Activated B cell treated with CpG ODN at 0.5 μM for 24 hours (primary cell): ENCODE measurements at regions of chr10 and their contacts with region 1.

Region 1: DNA sequence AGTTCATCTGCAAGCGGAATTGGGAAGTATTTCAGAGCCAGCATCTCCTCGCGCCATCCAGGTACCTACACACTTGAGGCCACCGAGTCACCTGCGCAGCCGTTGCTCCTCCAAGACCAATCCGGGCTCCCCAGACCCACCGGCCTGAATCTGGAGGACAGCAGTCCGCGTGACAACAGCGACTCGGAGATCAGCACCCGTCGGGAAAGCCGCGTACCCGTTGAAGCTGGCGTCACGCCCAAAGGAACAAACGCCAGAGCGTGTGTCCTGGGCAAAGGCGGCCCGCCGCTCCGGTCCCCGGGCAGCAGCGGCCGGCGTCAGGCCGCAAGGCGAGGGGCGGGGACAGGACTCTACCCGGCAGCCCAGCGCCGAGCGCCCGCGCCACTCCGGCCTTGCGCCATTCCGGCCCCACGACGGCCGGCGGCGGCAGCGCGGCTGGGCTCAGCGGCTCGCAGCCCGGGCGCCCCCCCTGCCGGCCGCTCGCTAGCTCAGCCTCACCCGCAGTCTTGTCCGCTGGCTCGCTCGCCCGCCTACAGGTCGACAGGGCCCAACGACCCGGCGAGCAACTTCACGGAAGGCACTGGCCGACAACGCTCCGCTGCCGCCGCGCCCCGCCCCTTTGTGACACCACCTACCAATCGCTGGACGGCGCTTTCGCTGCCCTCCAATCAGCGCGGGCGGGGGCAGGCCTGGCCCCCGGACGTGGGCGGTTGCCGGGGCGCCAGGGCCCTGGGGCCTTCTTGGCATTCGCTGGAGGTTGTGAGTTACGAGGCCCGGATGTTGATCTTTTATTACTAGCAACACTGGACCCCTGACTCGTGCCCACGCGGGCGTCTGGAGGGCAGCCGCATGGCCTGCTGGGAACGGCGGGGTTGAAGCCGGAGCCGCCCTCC is at the start of gene ZFAND4:
- DNase-seq: peak; percentile 92
- ATAC-seq: peak; percentile 95
- H3K4me3 Mint-ChIP-seq: peak within 1 kb of the TSS; percentile 87
- H3K27ac Mint-ChIP-seq: peak within 1 kb of the TSS; percentile 89
- H3K4me1 Mint-ChIP-seq: peaks cover 28% of the 10 kb centered on the region
- H3K27me3 Mint-ChIP-seq: no peaks in the 10 kb centered on the region
- CTCF ChIP-seq: no peak
- total RNA-seq, gene ZFAND4: 19.8 and 22.1 TPM in 2 replicates

Region 2: GRCh38 chr10:45000752-45001380 is 671.6 kb before region 1 on chr10 and contains the start of gene ZNF22:
- CTCF ChIA-PET with region 1: no interaction called
- POLR2A ChIA-PET with region 1: no interaction called
- intact Hi-C with region 1: loop called (anchors 5 kb)
- DNase-seq: peak; percentile 76
- ATAC-seq: peak; percentile 82
- H3K4me3 Mint-ChIP-seq: peak within 1 kb of the TSS; percentile 90
- H3K27ac Mint-ChIP-seq: peak within 1 kb of the TSS; percentile 93
- H3K4me1 Mint-ChIP-seq: peaks cover 25% of the 10 kb centered on the region
- H3K27me3 Mint-ChIP-seq: no peaks in the 10 kb centered on the region
- CTCF ChIP-seq: no peak
- total RNA-seq, gene ZNF22: 34.2 and 37.5 TPM in 2 replicates

Region 3: DNA sequence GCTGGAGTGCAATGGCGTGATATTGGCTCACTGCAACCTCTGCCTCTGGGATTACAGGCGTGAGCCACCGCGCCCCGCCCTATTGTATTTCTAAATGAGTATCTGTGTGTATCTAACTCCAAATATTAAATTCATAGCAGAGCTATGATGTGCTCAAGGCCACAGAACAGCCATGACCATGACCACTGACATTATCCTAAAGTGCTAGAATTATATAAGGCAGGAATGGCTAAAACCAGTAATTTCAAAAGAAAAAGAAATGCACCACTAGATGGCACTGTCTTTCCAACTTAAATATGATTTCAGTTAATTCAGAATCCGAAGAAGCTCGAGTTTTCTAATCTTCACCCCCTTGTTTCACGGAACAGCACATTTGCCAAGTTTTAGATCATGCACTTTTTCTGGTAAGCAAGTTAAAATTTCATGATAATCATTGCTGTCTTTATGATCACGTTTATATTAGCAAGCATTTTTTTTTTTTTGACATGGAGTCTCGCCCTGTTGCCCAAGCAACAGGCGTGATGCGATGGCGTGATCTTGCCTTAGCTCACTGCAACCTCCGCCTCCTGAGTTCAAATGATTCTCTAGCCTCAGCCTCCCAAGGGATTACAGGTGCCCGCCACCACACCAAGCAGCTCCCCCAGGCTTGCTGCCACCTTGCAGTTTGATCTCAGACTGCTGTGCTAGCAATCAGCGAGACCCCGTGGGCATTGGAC is 422.3 kb before region 1 on chr10:
- CTCF ChIA-PET with region 1: interaction called, 19 read pairs
- POLR2A ChIA-PET with region 1: interaction called, 9 read pairs
- intact Hi-C with region 1: loop called (anchors 1 kb)
- DNase-seq: peak; percentile 42
- ATAC-seq: peak; percentile 84
- H3K4me3 Mint-ChIP-seq: peak overlapping the region; percentile 85
- H3K27ac Mint-ChIP-seq: peak overlapping the region; percentile 91
- H3K4me1 Mint-ChIP-seq: peaks cover 26% of the 10 kb centered on the region
- H3K27me3 Mint-ChIP-seq: peaks cover 2% of the 10 kb centered on the region
- CTCF ChIP-seq: peak; percentile 81

Region 4: DNA sequence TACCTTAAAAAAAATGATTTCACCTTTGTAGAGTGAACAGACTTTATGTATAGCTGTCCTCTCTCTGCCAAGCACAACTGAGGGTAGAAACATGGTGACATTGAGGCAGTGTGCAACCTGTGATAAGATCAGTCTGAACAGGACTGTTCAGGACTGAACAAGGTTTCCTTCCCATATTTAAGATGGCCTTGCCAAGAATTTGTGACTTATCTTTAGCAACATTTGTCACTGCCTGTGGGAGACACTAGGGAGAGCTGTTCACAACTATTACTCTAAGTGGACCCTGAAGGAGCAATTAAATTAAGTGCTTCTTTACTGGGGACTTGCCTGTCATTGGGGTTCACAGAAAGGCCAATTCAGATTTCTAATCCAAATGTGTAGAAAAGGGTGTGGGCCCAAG is 363.7 kb before region 1 on chr10:
- CTCF ChIA-PET with region 1: no interaction called
- POLR2A ChIA-PET with region 1: no interaction called
- intact Hi-C with region 1: loop called (anchors 5 kb)
- DNase-seq: no peak
- ATAC-seq: peak; percentile 18
- H3K4me3 Mint-ChIP-seq: no peak overlapping the region
- H3K27ac Mint-ChIP-seq: no peak overlapping the region
- H3K4me1 Mint-ChIP-seq: peaks cover 3% of the 10 kb centered on the region
- H3K27me3 Mint-ChIP-seq: no peaks in the 10 kb centered on the region
- CTCF ChIP-seq: no peak

Region 5: GRCh38 chr10:45339894-45340293 is 332.5 kb before region 1 on chr10:
- CTCF ChIA-PET with region 1: no interaction called
- POLR2A ChIA-PET with region 1: no interaction called
- intact Hi-C with region 1: no loop called
- DNase-seq: no peak
- ATAC-seq: no peak
- H3K4me3 Mint-ChIP-seq: no peak overlapping the region
- H3K27ac Mint-ChIP-seq: no peak overlapping the region
- H3K4me1 Mint-ChIP-seq: peaks cover 10% of the 10 kb centered on the region
- H3K27me3 Mint-ChIP-seq: no peaks in the 10 kb centered on the region
- CTCF ChIP-seq: no peak

Region 6: DNA sequence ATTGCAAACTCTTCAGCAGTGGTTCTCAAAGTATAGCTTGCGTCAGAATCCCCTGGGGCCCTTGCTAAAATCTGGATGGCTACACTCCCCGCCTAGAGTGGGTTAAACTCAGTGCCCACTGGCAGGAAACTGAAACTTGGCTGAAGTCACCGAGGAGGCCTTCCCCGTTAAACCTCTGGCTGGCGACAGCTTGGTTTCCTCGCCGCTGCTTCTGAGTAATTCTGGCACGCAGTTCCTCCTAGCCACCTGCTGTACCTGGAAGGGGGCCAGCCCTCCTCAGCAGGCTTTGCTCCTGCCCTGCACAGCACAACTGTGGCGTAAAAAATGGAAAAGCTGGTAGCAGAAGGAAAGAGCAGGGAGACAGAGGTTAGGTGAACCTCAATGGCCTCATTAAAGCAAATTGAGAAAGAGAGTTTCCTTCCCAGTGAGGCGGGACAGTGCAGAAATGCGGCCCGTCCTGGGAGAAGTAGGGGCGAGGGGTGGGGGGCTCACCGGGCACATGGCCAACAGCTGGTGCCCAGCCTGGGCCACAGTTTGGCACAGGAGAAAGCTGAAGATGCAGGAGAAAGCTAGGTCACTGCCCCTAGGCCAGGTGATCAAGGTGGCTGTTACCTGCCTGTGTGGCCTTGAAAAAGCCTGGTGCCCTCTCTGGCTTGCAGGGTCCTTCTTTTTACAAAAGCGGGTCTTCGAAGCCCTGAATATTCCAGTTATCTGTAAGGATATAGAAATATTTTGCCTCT is 251.8 kb before region 1 on chr10:
- CTCF ChIA-PET with region 1: no interaction called
- POLR2A ChIA-PET with region 1: no interaction called
- intact Hi-C with region 1: loop called (anchors 5 kb)
- DNase-seq: peak; percentile 50
- ATAC-seq: peak; percentile 56
- H3K4me3 Mint-ChIP-seq: peak overlapping the region; percentile 95
- H3K27ac Mint-ChIP-seq: peak overlapping the region; percentile 97
- H3K4me1 Mint-ChIP-seq: peaks cover 65% of the 10 kb centered on the region
- H3K27me3 Mint-ChIP-seq: no peaks in the 10 kb centered on the region
- CTCF ChIP-seq: no peak

Region 7: DNA sequence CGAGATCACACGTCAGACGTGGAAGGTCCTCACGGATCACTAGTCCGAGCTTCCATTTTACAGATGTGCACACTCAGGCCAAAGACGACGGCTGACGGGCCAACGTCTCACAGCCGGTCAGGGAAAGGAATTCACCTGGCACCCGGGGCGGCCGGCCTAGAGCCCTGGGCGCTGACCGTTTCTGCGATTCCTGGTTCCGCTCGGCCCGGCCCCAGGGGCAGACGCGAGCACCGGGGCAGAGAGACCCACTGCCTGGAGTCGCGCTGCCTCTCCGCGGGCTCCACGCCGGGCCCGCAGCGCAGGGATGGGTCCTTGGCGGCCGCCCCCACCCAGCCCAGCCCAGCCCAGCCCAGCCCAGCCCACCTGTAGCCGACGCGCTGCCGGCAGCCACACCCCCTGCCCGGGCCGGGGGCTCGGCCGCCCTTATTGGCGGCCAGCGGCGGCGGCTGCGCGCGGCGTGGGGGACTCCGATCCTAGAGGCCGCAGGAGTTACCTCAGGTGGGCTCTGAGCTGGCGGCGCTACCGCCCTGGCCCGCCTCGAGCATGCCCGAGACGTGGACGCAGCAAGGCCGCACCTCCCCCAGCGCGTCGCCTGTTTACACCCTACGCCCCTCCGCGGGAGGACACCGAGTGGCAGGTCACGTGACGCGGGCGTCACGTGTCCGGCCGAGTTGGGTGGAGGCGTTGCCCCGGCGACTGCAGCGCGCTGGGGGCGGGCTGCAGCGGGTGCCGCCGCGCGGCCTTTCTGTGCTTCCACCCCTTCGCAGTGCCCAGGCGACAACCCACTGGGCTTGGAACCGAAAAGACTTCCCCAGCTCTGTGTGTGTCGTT is 77.9 kb before region 1 on chr10:
- CTCF ChIA-PET with region 1: interaction called, 5 read pairs
- POLR2A ChIA-PET with region 1: interaction called, 4 read pairs
- intact Hi-C with region 1: loop called (anchors 5 kb)
- DNase-seq: peak; percentile 91
- ATAC-seq: peak; percentile 88
- H3K4me3 Mint-ChIP-seq: peak overlapping the region; percentile 86
- H3K27ac Mint-ChIP-seq: peak overlapping the region; percentile 91
- H3K4me1 Mint-ChIP-seq: peaks cover 42% of the 10 kb centered on the region
- H3K27me3 Mint-ChIP-seq: no peaks in the 10 kb centered on the region
- CTCF ChIP-seq: no peak